ENCODE measurements at regions of chr10 and their contacts with region 1.

Region 1: DNA sequence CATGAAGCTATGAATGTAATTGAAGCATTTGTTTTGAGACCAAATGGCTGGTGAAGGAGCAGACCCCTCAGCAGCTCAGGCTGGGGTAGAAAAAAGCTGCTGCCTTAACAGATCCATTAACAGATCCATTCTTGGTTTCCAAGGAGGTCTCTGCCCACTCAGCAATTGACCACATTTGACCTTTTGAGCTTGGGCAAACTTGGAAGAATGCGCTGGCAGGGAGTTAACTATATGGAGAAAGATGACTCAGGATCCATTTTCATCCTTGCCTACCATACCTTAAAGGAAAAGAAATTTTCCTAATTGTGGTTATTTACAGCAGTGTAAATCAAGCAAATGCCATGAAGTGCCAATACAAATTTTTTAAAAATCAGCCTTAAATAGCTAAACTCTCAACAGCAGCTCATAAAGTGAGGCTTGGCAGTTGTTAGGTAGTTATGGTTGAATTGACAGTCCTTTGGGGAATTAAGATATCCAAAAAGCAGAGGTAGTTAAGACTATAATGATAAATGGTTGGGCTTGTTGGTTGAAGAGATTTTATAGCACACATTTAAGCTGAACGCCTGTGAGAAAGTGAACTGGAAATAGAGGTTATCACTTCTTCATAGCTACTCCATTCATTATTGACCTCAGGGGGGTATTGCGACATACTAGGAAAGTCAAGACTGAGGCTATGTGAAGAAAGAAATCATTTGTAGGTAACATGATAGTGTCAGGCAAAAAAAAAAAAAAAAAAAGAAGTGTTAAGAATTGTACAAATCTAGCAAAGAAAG is 83.9 kb downstream of the MKX start:
- DNase-seq: no peak
- ATAC-seq: no peak
- H3K4me3 ChIP-seq: no peak overlapping the region
- H3K4me3 Mint-ChIP-seq: no peak overlapping the region
- H3K27ac ChIP-seq: no peak overlapping the region
- H3K27ac Mint-ChIP-seq: no peak overlapping the region
- H3K4me1 ChIP-seq: no peaks in the 10 kb centered on the region
- H3K4me1 Mint-ChIP-seq: peaks cover 0 to 7% (median 0%) of the 10 kb centered on the region in 7 donors
- H3K27me3 ChIP-seq: peaks cover 0 to 4% of the 10 kb centered on the region in 2 donors
- H3K27me3 Mint-ChIP-seq: peaks cover 31 to 53% (median 39%) of the 10 kb centered on the region in 5 donors

Region 2: GRCh38 chr10:26217396-26218086 is 1444.2 kb before region 1 on chr10:
- CTCF ChIA-PET with region 1: no interaction called
- POLR2A ChIA-PET with region 1: no interaction called
- intact Hi-C with region 1: no loop called
- DNase-seq: no peak
- ATAC-seq: no peak
- H3K4me3 ChIP-seq: no peak overlapping the region
- H3K4me3 Mint-ChIP-seq: peak overlapping the region in 9 of 10 donors; percentile 32 to 86 (median 62)
- H3K27ac ChIP-seq: no peak overlapping the region
- H3K27ac Mint-ChIP-seq: peak overlapping the region in 1 of 9 donors; percentile 52
- H3K4me1 ChIP-seq: peaks cover 0 to 2% of the 10 kb centered on the region in 2 donors
- H3K4me1 Mint-ChIP-seq: peaks cover 14 to 42% (median 32%) of the 10 kb centered on the region in 7 donors
- H3K27me3 ChIP-seq: peaks cover 0 to 25% of the 10 kb centered on the region in 2 donors
- H3K27me3 Mint-ChIP-seq: peaks cover 81 to 95% (median 92%) of the 10 kb centered on the region in 5 donors

Region 3: DNA sequence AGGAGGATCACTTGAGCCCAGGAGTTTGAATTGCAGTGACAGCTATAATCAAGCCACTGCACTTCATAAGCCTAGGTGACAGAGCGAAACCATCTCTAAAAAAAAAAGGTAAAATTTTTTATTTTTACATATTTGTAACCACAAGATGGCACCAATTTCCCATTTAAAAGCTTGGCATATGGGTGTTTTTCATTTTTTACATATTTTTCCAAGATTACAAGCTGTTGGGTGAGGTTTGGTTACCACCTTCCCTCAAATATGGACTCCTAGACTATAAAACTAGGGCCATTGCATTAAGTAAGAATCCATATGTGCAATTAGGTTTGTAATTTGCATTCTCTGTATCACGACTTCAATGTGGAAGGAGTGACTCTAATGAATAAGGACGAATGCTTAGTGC is 291.8 kb before region 1 on chr10:
- CTCF ChIA-PET with region 1: interaction called, 3 read pairs
- POLR2A ChIA-PET with region 1: no interaction called
- intact Hi-C with region 1: loop called in 1 of 2 experiments (anchors 1 kb)
- DNase-seq: peak in 2 of 9 donors; percentile 9 to 11
- ATAC-seq: no peak
- H3K4me3 ChIP-seq: no peak overlapping the region
- H3K4me3 Mint-ChIP-seq: no peak overlapping the region
- H3K27ac ChIP-seq: no peak overlapping the region
- H3K27ac Mint-ChIP-seq: no peak overlapping the region
- H3K4me1 ChIP-seq: no peaks in the 10 kb centered on the region
- H3K4me1 Mint-ChIP-seq: peaks cover 0 to 3% (median 0%) of the 10 kb centered on the region in 7 donors
- H3K27me3 ChIP-seq: no peaks in the 10 kb centered on the region
- H3K27me3 Mint-ChIP-seq: peaks cover 0 to 8% (median 4%) of the 10 kb centered on the region in 5 donors

Region 4: GRCh38 chr10:27558612-27559020 is 103.1 kb before region 1 on chr10:
- CTCF ChIA-PET with region 1: interaction called, 3 read pairs
- POLR2A ChIA-PET with region 1: no interaction called
- intact Hi-C with region 1: loop called (anchors 1 kb)
- DNase-seq: peak in 3 of 9 donors; percentile 10 to 25 (median 15)
- ATAC-seq: peak; percentile 63
- H3K4me3 ChIP-seq: no peak overlapping the region
- H3K4me3 Mint-ChIP-seq: no peak overlapping the region
- H3K27ac ChIP-seq: no peak overlapping the region
- H3K27ac Mint-ChIP-seq: peak overlapping the region in 1 of 9 donors; percentile 36
- H3K4me1 ChIP-seq: peaks cover 0 to under 1% of the 10 kb centered on the region in 2 donors
- H3K4me1 Mint-ChIP-seq: peaks cover 0 to 4% (median 0%) of the 10 kb centered on the region in 7 donors
- H3K27me3 ChIP-seq: no peaks in the 10 kb centered on the region
- H3K27me3 Mint-ChIP-seq: peaks cover 0 to 16% (median 0%) of the 10 kb centered on the region in 5 donors

Region 5: DNA sequence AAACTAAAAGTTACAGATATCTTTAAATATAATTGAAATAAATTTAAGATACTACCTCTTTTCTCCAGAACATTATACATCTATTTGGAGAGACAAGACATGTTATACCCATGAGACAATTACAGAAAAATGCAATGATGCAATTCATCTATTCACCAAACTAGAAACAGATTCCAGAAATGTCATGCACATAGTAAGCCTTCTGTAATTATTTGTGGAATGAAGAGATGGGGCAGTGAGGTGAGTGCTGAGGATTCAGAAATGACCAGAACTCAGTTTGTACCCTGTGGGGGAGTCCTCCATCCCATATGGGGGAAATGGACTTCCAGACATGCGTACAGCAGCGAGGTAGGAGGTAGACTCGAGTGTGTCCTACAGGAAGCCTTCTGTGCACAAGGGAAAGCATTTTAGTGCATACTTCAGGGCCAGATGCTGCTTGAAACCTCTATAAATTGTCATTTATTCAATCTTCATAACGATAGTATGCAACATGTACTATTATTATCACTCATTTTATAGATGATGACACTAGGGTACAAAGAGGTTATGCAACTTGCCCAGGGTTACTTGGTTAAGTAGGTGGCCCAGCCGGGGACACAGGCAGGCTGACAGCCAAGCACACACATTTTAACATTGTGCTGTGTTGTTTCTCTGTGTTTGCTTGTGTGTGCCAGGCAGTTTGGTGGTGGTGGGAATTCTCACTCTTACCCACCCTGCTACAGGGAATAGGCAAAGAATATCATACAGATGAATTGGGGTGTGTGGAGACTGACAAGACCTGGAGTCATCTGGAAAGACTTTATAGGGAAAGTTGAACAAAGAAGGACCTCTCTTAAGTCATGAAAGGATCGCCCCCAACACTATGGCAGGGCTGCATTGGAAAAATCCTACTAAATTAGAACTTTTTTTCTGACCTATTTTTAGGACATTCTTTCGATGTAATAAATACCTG is 15.2 kb before region 1 on chr10:
- CTCF ChIA-PET with region 1: interaction called, 11 read pairs
- POLR2A ChIA-PET with region 1: no interaction called
- intact Hi-C with region 1: no loop called
- DNase-seq: no peak
- ATAC-seq: no peak
- H3K4me3 ChIP-seq: no peak overlapping the region
- H3K4me3 Mint-ChIP-seq: peak overlapping the region in 1 of 10 donors; percentile 16
- H3K27ac ChIP-seq: no peak overlapping the region
- H3K27ac Mint-ChIP-seq: no peak overlapping the region
- H3K4me1 ChIP-seq: no peaks in the 10 kb centered on the region
- H3K4me1 Mint-ChIP-seq: no peaks in the 10 kb centered on the region
- H3K27me3 ChIP-seq: no peaks in the 10 kb centered on the region
- H3K27me3 Mint-ChIP-seq: peaks cover 17 to 45% (median 40%) of the 10 kb centered on the region in 5 donors

Region 6: DNA sequence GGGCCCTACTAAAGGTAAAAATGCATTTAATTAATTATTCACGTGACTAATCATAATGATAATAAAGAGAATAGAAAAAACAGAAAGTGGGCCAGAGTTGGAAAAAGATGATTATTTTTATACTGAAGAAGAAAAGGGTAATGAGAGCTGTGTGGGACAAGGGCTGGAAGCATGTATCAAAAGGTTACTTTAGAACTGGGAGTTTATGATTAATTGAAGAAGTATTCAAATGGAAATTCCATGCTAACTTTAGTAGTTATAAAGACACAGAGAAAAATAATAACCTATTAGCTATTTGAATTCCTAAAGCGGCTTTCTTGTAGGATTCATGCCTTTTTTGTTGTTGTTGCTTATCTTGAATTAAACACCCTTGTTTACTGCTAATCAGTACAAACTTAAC is 34.0 kb after region 1 on chr10:
- CTCF ChIA-PET with region 1: no interaction called
- POLR2A ChIA-PET with region 1: no interaction called
- intact Hi-C with region 1: no loop called
- DNase-seq: no peak
- ATAC-seq: no peak
- H3K4me3 ChIP-seq: no peak overlapping the region
- H3K4me3 Mint-ChIP-seq: no peak overlapping the region
- H3K27ac ChIP-seq: no peak overlapping the region
- H3K27ac Mint-ChIP-seq: no peak overlapping the region
- H3K4me1 ChIP-seq: no peaks in the 10 kb centered on the region
- H3K4me1 Mint-ChIP-seq: no peaks in the 10 kb centered on the region
- H3K27me3 ChIP-seq: no peaks in the 10 kb centered on the region
- H3K27me3 Mint-ChIP-seq: peaks cover 12 to 34% (median 17%) of the 10 kb centered on the region in 5 donors

Region 7: GRCh38 chr10:28503114-28503513 is 841.4 kb after region 1 on chr10:
- CTCF ChIA-PET with region 1: no interaction called
- POLR2A ChIA-PET with region 1: no interaction called
- intact Hi-C with region 1: no loop called
- DNase-seq: no peak
- ATAC-seq: no peak
- H3K4me3 ChIP-seq: no peak overlapping the region
- H3K4me3 Mint-ChIP-seq: peak overlapping the region in 1 of 10 donors; percentile 9
- H3K27ac ChIP-seq: no peak overlapping the region
- H3K27ac Mint-ChIP-seq: no peak overlapping the region
- H3K4me1 ChIP-seq: no peaks in the 10 kb centered on the region
- H3K4me1 Mint-ChIP-seq: peaks cover 0 to 5% (median 4%) of the 10 kb centered on the region in 7 donors
- H3K27me3 ChIP-seq: no peaks in the 10 kb centered on the region
- H3K27me3 Mint-ChIP-seq: peaks cover 0 to 3% (median 0%) of the 10 kb centered on the region in 5 donors

Measured in naive thymus-derived CD4-positive, alpha-beta T cell (primary cell).